Prostate gland (tissue), 2 donors: ENCODE measurements at regions of chr10 and their contacts with region 1.

Region 1: GRCh38 chr10:88938039-88938438 is 14.5 kb downstream of the ACTA2 start:
- DNase-seq: no peak
- H3K4me3 ChIP-seq: no peak overlapping the region
- H3K27ac ChIP-seq: no peak overlapping the region
- H3K4me1 ChIP-seq: no peaks in the 10 kb centered on the region
- H3K27me3 ChIP-seq: no peaks in the 10 kb centered on the region
- CTCF ChIP-seq: no peak
- POLR2A ChIP-seq: no peak

Region 2: DNA sequence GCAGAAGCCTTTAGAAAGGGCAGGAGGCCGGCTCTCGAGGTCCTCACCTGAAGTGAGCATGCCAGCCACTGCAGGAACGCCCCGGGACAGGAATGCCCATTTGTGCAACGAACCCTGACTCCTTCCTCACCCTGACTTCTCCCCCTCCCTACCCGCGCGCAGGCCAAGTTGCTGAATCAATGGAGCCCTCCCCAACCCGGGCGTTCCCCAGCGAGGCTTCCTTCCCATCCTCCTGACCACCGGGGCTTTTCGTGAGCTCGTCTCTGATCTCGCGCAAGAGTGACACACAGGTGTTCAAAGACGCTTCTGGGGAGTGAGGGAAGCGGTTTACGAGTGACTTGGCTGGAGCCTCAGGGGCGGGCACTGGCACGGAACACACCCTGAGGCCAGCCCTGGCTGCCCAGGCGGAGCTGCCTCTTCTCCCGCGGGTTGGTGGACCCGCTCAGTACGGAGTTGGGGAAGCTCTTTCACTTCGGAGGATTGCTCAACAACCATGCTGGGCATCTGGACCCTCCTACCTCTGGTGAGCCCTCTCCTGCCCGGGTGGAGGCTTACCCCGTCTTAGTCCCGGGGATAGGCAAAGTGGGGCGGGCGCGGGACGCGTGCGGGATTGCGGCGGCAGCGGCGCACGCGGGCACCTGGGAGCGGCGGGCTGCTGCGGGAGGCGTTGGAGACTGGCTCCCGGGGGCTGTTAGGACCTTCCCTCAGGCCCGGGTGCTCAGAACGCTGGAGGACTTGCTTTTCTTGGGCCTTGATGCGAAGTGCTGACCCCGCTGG is 52.5 kb after region 1 on chr10 and contains the start of gene FAS:
- intact Hi-C with region 1: loop called (anchors 2 kb)
- DNase-seq: peak; percentile 67
- H3K4me3 ChIP-seq: peak within 1 kb of the TSS; percentile 69 to 84
- H3K27ac ChIP-seq: peak within 1 kb of the TSS; percentile 87 to 95
- H3K4me1 ChIP-seq: no peaks in the 10 kb centered on the region
- H3K27me3 ChIP-seq: no peaks in the 10 kb centered on the region
- CTCF ChIP-seq: no peak
- POLR2A ChIP-seq: peak; percentile 58
- total RNA-seq, gene FAS: 13.7 to 17.7 TPM